ENCODE measurements at regions of chr19 and their contacts with region 1.

Region 1: GRCh38 chr19:8252922-8253589 is 43.9 kb downstream of the CERS4 start:
- DNase-seq: peak; percentile 67 to 87 (median 80)
- ATAC-seq: peak; percentile 95
- H3K4me3 ChIP-seq: no peak overlapping the region
- H3K4me3 Mint-ChIP-seq: no peak overlapping the region
- H3K27ac ChIP-seq: no peak overlapping the region
- H3K27ac Mint-ChIP-seq: peak overlapping the region in 2 of 9 donors; percentile 73 to 84
- H3K4me1 ChIP-seq: no peaks in the 10 kb centered on the region
- H3K4me1 Mint-ChIP-seq: peaks cover 0 to 11% (median 6%) of the 10 kb centered on the region in 7 donors
- H3K27me3 ChIP-seq: no peaks in the 10 kb centered on the region
- H3K27me3 Mint-ChIP-seq: no peaks in the 10 kb centered on the region

Region 2: DNA sequence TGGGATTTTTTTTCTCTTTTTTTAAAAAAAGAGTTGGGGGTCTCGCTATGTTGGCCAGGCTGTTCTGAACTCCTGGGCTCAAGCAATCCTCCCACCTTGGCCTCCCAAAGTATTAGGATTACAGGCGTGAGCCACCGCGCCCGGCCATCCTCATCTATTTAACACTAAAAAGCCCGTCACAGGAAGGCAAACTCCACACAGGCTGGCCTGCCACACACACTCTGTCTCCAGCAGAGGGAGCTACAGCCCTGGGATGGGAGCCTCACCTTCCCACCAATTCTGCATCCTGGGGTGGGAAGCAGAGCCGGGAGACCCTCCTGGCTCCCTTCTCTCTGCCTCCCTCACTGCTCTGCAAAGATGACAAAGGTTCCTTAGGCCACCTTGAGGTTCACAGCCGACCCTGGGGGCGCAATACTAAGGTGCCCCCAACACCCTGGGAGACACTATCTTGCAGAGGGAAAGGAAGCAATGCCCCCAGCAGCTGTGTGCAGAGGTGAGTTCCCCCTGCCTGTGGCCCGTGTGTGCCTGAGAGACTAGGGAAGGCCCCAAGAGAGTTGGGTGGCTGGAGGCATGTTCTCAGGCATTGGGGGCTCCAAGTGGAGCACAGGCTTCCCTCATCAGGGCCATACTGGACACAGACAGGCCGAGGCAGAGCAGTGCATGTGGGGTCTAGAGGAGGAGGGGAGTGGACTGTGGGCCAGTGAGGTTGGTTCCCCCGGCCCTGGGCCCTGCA is 282.2 kb before region 1 on chr19:
- CTCF ChIA-PET with region 1: no interaction called
- POLR2A ChIA-PET with region 1: no interaction called
- intact Hi-C with region 1: loop called in 1 of 2 experiments (anchors 1 kb)
- DNase-seq: peak in 2 of 9 donors; percentile 13 to 29
- ATAC-seq: peak; percentile 60
- H3K4me3 ChIP-seq: no peak overlapping the region
- H3K4me3 Mint-ChIP-seq: no peak overlapping the region
- H3K27ac ChIP-seq: no peak overlapping the region
- H3K27ac Mint-ChIP-seq: peak overlapping the region in 1 of 9 donors; percentile 32
- H3K4me1 ChIP-seq: no peaks in the 10 kb centered on the region
- H3K4me1 Mint-ChIP-seq: peaks cover 0 to 3% (median 0%) of the 10 kb centered on the region in 7 donors
- H3K27me3 ChIP-seq: no peaks in the 10 kb centered on the region
- H3K27me3 Mint-ChIP-seq: no peaks in the 10 kb centered on the region

Region 3: DNA sequence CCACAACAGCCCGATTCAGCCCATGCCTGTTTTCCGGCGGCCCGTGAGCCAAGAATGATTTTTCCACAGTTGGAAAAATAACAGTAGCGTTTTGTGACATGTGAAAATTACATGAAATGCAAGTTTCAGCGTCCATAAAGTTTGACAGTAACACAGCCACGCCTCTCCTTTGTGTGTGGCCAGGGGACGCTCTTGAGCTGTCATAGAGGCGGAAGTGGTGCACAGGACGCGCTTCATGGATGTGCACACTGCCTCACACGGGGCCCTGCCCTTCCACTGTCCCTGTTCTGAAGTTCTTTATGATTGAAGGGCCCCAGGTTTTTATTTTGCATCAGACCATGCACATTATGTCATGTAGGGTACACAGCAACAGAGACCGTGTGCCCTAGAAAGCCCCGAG is 235.2 kb before region 1 on chr19:
- CTCF ChIA-PET with region 1: interaction called, 3 read pairs
- POLR2A ChIA-PET with region 1: no interaction called
- intact Hi-C with region 1: loop called (anchors 1 to 5 kb)
- DNase-seq: peak in 6 of 9 donors; percentile 11 to 60 (median 50)
- ATAC-seq: peak; percentile 97
- H3K4me3 ChIP-seq: no peak overlapping the region
- H3K4me3 Mint-ChIP-seq: no peak overlapping the region
- H3K27ac ChIP-seq: no peak overlapping the region
- H3K27ac Mint-ChIP-seq: peak overlapping the region in 5 of 9 donors; percentile 27 to 62 (median 40)
- H3K4me1 ChIP-seq: no peaks in the 10 kb centered on the region
- H3K4me1 Mint-ChIP-seq: peaks cover 0 to 10% (median 9%) of the 10 kb centered on the region in 7 donors
- H3K27me3 ChIP-seq: no peaks in the 10 kb centered on the region
- H3K27me3 Mint-ChIP-seq: no peaks in the 10 kb centered on the region

Region 4: DNA sequence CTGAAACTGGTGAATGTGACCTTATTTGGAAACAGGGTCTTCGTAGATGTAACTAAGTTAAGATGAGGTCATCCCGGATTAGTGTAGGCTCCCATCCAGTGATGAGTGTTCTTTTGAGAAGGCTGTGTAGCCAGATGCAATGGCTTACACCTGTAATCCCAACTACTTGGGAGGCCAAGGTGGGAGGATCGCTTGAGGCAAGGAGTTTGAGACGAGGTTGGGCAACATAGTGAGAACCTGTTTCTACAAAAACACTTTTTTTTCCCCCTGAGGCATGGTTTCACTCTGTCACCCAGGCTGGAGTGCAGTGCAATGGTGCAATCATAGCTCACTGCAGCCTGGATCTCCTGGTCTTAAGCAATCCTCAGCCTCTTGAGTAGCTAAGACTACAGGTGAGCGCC is 140.0 kb before region 1 on chr19:
- CTCF ChIA-PET with region 1: no interaction called
- POLR2A ChIA-PET with region 1: no interaction called
- intact Hi-C with region 1: no loop called
- DNase-seq: no peak
- ATAC-seq: no peak
- H3K4me3 ChIP-seq: no peak overlapping the region
- H3K4me3 Mint-ChIP-seq: no peak overlapping the region
- H3K27ac ChIP-seq: no peak overlapping the region
- H3K27ac Mint-ChIP-seq: no peak overlapping the region
- H3K4me1 ChIP-seq: no peaks in the 10 kb centered on the region
- H3K4me1 Mint-ChIP-seq: no peaks in the 10 kb centered on the region
- H3K27me3 ChIP-seq: peaks cover 0 to 2% of the 10 kb centered on the region in 2 donors
- H3K27me3 Mint-ChIP-seq: peaks cover 0 to 20% (median 13%) of the 10 kb centered on the region in 5 donors

Region 5: GRCh38 chr19:8158411-8159074 is 94.5 kb before region 1 on chr19:
- CTCF ChIA-PET with region 1: interaction called, 10 read pairs
- POLR2A ChIA-PET with region 1: interaction called, 3 read pairs
- intact Hi-C with region 1: loop called (anchors 1 kb)
- DNase-seq: peak in 8 of 9 donors; percentile 34 to 70 (median 60)
- ATAC-seq: peak; percentile 69
- H3K4me3 ChIP-seq: no peak overlapping the region
- H3K4me3 Mint-ChIP-seq: no peak overlapping the region
- H3K27ac ChIP-seq: no peak overlapping the region
- H3K27ac Mint-ChIP-seq: no peak overlapping the region
- H3K4me1 ChIP-seq: no peaks in the 10 kb centered on the region
- H3K4me1 Mint-ChIP-seq: peaks cover 0 to 12% (median 3%) of the 10 kb centered on the region in 7 donors
- H3K27me3 ChIP-seq: no peaks in the 10 kb centered on the region
- H3K27me3 Mint-ChIP-seq: peaks cover 4 to 27% (median 23%) of the 10 kb centered on the region in 5 donors

Region 6: DNA sequence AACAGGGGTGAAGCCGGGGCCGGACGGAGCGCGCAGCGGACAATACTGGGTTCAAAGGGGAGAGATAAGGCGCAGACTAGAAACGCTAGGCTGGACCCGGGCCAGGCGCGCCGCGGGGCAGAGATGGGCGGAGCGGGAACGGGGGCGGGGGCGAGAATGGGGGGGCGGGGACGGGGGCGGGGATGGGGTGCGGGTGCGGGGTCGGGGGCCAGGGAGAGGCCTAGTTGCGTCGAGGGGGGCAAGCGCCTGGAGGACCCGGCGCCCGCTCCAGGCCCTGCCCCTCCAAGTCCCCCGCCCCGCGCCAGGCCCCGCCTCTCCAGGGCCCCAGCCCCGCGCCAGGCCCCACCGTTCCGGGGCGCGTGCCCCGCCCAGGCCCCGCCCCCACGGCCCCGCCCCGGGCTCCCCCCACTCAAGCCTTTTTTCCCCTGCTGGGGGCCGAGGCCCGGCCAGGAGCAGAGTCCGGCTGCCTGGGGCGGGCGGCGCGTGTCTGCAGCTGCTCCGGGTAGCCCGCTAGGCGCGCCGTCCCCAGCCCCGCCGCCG is 44.1 kb before region 1 on chr19 and contains the start of gene CERS4:
- CTCF ChIA-PET with region 1: no interaction called
- POLR2A ChIA-PET with region 1: no interaction called
- intact Hi-C with region 1: loop called (anchors 2 to 5 kb)
- DNase-seq: peak in 4 of 9 donors; percentile 69 to 82 (median 77)
- ATAC-seq: peak; percentile 92
- H3K4me3 ChIP-seq: peak within 1 kb of the TSS; percentile 84
- H3K4me3 Mint-ChIP-seq: peak within 1 kb of the TSS; percentile 72 to 94 (median 90)
- H3K27ac ChIP-seq: peak within 1 kb of the TSS; percentile 96
- H3K27ac Mint-ChIP-seq: peak within 1 kb of the TSS; percentile 72 to 96 (median 83)
- H3K4me1 ChIP-seq: peaks cover 5 to 17% of the 10 kb centered on the region in 2 donors
- H3K4me1 Mint-ChIP-seq: peaks cover 19 to 30% (median 27%) of the 10 kb centered on the region in 7 donors
- H3K27me3 ChIP-seq: no peaks in the 10 kb centered on the region
- H3K27me3 Mint-ChIP-seq: peaks cover 0 to 9% (median 0%) of the 10 kb centered on the region in 5 donors
- total RNA-seq, gene CERS4: 17.2 to 32.4 (median 27.4) TPM

Region 7: DNA sequence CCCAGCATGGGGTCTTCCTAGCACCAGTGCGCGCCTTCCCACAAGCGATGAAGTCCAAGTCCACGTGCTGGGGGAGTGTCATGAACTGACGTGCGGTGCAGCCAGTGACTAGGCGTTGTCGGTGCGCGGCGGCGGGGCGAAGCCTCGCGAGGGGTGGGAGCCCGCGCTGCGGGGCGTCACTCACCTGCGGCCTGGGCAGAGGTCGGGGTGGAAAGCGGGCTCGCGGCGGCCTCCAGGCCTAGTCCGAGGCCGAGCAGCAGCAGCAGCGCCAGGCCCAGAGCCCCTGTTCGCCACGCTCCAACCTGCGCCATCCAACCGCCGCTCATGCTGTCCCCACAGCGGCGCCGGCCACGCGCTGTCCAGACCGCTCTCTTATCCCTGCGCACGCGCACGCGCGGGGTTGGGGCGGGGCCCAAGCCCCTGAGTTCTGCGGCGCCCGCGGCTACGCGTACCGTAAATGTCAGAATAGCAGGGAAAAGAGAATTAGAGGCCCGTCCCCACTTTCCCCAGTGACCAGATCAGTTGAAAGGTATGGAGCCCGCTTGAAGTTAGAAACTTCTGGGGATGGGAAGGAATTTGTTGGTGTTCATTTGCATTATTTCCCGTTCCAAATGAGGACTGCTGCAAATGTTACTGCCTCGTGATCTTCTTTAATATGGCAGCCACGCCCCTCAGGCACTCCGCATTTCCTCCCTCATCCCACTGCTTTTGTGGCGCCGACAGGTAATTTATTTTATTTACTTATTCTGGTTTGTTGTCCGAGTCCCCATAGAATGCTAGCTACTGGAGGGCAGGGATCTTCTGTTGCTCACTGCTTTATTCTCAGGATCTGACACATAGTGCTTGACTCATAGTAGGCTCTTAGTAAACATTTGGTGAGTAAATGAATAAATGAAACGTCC is 55.2 kb after region 1 on chr19 and contains the start of gene CD320:
- CTCF ChIA-PET with region 1: no interaction called
- POLR2A ChIA-PET with region 1: no interaction called
- intact Hi-C with region 1: loop called in 1 of 2 experiments (anchors 10 kb)
- DNase-seq: peak; percentile 84 to 90 (median 89)
- ATAC-seq: peak; percentile 95
- H3K4me3 ChIP-seq: peak within 1 kb of the TSS; percentile 83
- H3K4me3 Mint-ChIP-seq: peak within 1 kb of the TSS; percentile 90 to 97 (median 92)
- H3K27ac ChIP-seq: peak within 1 kb of the TSS; percentile 89
- H3K27ac Mint-ChIP-seq: peak within 1 kb of the TSS; percentile 79 to 98 (median 94)
- H3K4me1 ChIP-seq: peaks cover 20 to 22% of the 10 kb centered on the region in 2 donors
- H3K4me1 Mint-ChIP-seq: peaks cover 18 to 38% (median 35%) of the 10 kb centered on the region in 7 donors
- H3K27me3 ChIP-seq: no peaks in the 10 kb centered on the region
- H3K27me3 Mint-ChIP-seq: no peaks in the 10 kb centered on the region
- total RNA-seq, gene CD320: 20.5 to 52.0 (median 27.2) TPM

Measured in naive thymus-derived CD4-positive, alpha-beta T cell (primary cell).